HEK293 (cell line): ENCODE measurements at regions of chr12 and their contacts with region 1.

Region 1: GRCh38 chr12:7806863-7807487 is 17.8 kb downstream of the NANOG start:
- H3K4me3 ChIP-seq: no peak overlapping the region
- H3K27ac ChIP-seq: no peak overlapping the region
- H3K4me1 ChIP-seq: no peaks in the 10 kb centered on the region
- CTCF ChIP-seq: peak; percentile 73

Region 2: DNA sequence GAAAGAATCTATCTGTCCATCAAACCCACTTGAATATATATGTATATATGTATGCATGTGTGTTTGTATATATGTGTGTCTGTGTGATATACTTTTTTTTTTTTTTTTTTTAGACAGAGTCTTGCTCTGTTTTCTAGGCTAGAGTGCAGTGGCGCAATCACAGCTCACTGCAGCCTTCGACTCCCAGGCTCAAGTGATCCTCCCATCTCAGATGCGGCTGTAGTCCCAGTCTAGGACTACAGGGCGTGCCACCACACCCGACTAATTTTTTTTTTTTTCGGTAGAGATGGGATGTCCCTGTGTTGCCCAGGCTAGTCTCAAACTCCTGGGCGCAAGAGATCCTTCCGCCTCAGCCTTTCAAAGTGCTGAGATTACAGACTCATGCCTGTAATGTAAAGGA is 128.2 kb before region 1 on chr12:
- CTCF ChIA-PET with region 1: interaction called, 62 read pairs
- POLR2A ChIA-PET with region 1: interaction called, 6 read pairs
- H3K4me3 ChIP-seq: no peak overlapping the region
- H3K27ac ChIP-seq: no peak overlapping the region
- H3K4me1 ChIP-seq: no peaks in the 10 kb centered on the region
- CTCF ChIP-seq: no peak